Transverse colon (tissue), 4 donors: ENCODE measurements at regions of chr1 and their contacts with region 1.

Region 1: GRCh38 chr1:207828485-207829158 is 76.8 kb downstream of the CD46 start:
- DNase-seq: peak; percentile 84
- H3K4me3 ChIP-seq: no peak overlapping the region
- H3K27ac ChIP-seq: peak overlapping the region; percentile 96 to 99 (median 98)
- H3K4me1 ChIP-seq: peaks cover 61 to 79% (median 69%) of the 10 kb centered on the region in 4 donors
- H3K27me3 ChIP-seq: no peaks in the 10 kb centered on the region
- CTCF ChIP-seq: peak; percentile 83 to 99 (median 87)
- EP300 ChIP-seq: no peak
- POLR2A ChIP-seq: no peak

Region 2: GRCh38 chr1:206905280-206906164 is 923.1 kb before region 1 on chr1:
- in situ Hi-C with region 1: no loop called
- intact Hi-C with region 1: no loop called
- DNase-seq: no peak
- H3K4me3 ChIP-seq: no peak overlapping the region
- H3K27ac ChIP-seq: no peak overlapping the region
- H3K4me1 ChIP-seq: peaks cover 3 to 15% (median 11%) of the 10 kb centered on the region in 4 donors
- H3K27me3 ChIP-seq: peaks cover 9% of the 10 kb centered on the region
- CTCF ChIP-seq: no peak
- EP300 ChIP-seq: no peak
- POLR2A ChIP-seq: no peak

Region 3: GRCh38 chr1:207868774-207869721 is 40.4 kb after region 1 on chr1:
- in situ Hi-C with region 1: loop called in 3 of 4 experiments (anchors 5 to 10 kb)
- intact Hi-C with region 1: loop called (anchors 1 kb)
- DNase-seq: peak; percentile 81
- H3K4me3 ChIP-seq: peak overlapping the region; percentile 70 to 93 (median 76)
- H3K27ac ChIP-seq: peak overlapping the region; percentile 93 to 96 (median 95)
- H3K4me1 ChIP-seq: peaks cover 26 to 67% (median 47%) of the 10 kb centered on the region in 4 donors
- H3K27me3 ChIP-seq: no peaks in the 10 kb centered on the region
- CTCF ChIP-seq: peak; percentile 63 to 88 (median 80)
- EP300 ChIP-seq: no peak
- POLR2A ChIP-seq: no peak

Region 4: GRCh38 chr1:207876131-207876530 is 47.5 kb after region 1 on chr1:
- in situ Hi-C with region 1: loop called in 1 of 4 experiments (anchors 10 kb)
- intact Hi-C with region 1: no loop called
- DNase-seq: no peak
- H3K4me3 ChIP-seq: no peak overlapping the region
- H3K27ac ChIP-seq: no peak overlapping the region
- H3K4me1 ChIP-seq: peaks cover 0 to 12% (median 2%) of the 10 kb centered on the region in 4 donors
- H3K27me3 ChIP-seq: no peaks in the 10 kb centered on the region
- CTCF ChIP-seq: no peak
- EP300 ChIP-seq: no peak
- POLR2A ChIP-seq: no peak

Region 5: DNA sequence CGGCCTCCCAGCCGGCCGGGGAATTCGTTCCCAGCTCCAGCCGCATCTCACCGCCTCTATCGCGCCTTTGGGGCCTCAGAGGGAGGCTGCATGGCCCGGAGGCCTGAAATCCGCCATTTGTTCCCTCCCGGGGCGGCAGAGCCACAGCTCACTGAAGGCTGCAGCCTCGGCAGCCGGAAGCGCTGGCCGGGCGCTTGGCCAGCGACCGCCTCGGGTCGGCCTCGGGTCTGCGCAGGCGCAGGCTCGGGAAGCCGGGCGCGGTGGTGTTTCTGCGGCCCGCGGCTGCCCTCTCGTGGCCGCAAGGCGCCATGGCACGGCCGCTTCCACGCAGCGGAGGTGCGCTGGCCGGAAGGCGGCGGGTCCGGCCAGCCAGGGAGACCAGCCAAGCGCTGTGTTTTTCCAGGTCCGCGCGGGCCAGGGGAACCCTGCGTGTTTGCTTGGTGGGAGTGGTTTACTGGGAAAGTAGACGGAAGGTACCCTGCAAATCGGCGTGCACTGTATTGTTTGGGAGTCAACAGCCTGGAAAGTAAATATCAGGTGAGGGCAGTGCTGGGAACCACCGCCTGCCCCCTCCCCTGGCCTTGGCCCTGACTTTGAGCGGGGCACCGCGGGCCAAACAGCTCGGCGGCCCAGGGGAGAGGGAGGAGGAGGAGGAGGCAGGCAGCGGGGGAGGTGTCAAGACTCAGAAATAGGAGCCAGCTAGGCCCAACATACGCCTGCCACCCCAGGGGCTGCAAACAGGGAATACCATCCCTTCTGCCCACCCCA is 135.0 kb after region 1 on chr1:
- in situ Hi-C with region 1: loop called in 1 of 4 experiments (anchors 10 kb)
- intact Hi-C with region 1: loop called (anchors 5 kb)
- DNase-seq: peak; percentile 93
- H3K4me3 ChIP-seq: peak overlapping the region; percentile 50 to 77 (median 52)
- H3K27ac ChIP-seq: peak overlapping the region; percentile 94 to 97 (median 96)
- H3K4me1 ChIP-seq: peaks cover 8 to 32% (median 25%) of the 10 kb centered on the region in 4 donors
- H3K27me3 ChIP-seq: peaks cover 17% of the 10 kb centered on the region
- CTCF ChIP-seq: peak; percentile 91 to 100 (median 99)
- EP300 ChIP-seq: no peak
- POLR2A ChIP-seq: peak; percentile 94